AG04449 (cell line): ENCODE measurements at regions of chr9 and their contacts with region 1.

Region 1: DNA sequence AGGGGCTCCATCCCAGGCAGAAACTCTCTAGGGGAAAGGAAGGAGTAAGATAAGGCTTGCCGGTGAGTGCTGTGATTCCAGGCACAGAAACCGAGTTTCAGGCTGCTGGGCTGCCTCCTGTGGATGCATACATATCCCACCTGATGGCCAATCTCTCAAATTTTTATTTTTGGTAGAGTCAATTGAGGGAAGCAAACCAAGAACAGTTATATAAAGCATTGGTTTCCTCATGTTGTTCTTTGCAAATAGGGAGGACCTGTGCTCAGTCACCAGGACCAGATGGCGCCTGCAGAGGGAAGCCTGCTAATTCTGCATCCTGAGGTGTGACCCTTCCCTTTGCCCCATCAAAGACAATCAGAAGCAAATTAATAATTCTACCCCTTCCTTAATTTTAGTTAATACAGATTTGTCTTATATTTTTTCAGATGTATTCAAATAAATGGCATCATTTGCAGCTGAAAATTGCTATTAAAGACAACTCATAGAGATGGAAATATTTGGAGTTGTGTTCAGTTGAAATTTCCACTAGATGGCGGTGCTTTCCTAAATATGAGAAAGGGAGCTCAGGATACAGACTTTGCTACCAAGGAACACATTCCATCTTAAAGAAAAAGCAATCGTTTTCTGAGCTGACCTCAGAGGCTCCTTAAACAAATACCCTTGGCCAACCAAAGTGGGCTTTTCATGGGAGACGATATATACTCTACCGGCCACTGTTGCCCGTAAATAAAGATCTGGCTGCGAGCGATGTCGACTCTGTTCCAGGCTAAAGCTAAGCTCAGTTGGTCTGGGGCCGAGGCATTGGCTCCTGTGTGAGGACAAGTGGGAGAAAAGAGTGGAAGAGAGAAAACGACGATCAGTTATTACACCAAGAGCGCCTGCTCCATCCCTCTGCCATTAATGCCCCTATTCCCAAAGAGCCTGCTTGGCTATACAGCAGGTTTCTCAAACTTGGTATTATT is 225.7 kb upstream of the KLF9 start:
- DNase-seq: peak; percentile 29
- H3K4me3 ChIP-seq: no peak overlapping the region
- CTCF ChIP-seq: peak; percentile 34

Region 2: DNA sequence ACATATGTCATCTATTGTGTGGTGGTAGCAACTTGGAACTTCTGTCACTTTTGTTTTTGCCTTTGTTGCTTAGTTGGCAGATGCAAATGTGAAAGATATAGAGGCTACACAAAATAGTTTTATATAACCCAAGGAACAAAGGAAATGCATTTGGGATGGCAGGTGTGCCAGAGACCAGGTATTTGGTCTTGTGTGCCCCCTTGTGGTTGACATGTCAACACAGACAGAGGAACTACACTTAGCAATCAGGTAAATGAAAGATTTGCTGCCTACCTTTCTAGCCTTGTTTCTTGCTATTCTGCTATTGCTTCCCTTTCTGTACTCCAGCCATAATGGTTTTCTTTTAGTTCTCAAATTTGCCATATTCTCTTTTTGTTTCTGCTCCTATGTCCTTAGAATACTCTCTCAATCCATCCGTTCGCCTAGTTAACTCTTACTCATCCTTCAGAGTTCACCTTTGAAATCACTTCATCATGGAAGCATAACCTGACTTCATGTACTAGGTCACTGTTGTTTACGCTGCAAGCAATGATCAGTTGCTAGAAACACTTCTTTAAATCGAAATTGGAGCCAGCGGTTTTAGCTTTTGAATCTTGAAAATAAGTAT is 361.7 kb after region 1 on chr9:
- CTCF ChIA-PET with region 1: interaction called, 16 read pairs
- POLR2A ChIA-PET with region 1: no interaction called
- DNase-seq: no peak
- H3K4me3 ChIP-seq: no peak overlapping the region
- CTCF ChIP-seq: peak; percentile 39

Region 3: DNA sequence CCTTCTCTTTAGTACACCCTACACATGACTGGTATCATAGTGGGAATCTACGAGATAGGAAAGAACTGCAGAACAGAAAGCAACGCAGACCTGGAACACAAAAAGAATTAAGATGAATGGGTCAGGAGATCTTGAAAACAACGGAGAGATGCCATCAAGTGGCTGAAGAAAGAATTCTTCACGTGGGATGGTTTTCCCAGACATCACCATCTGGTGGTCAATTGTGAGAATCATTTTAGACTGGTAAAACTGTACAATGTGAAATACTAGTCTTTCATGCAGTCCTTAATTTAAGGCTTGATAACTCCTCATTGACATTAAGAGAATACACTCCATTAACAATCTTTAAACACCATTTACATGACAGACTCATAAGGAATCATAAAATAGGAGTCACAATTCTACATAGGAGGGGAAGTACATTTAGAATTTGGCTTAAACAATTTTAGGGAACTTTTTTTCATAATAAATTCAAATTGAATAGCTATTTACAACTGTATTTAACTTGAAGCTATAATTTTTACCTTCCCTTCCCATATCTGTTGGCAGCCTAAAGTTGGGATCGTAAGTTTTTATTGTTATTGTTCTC is 609.7 kb after region 1 on chr9:
- CTCF ChIA-PET with region 1: interaction called, 259 read pairs
- POLR2A ChIA-PET with region 1: no interaction called
- DNase-seq: peak; percentile 33
- H3K4me3 ChIP-seq: no peak overlapping the region
- CTCF ChIP-seq: peak; percentile 70